ENCODE measurements at regions of chr17 and their contacts with region 1.

Region 1: GRCh38 chr17:49210158-49211029 is at the starts of genes ABI3 and GNGT2:
- DNase-seq: peak; percentile 35 to 82 (median 54)
- ATAC-seq: peak; percentile 78 to 80
- H3K4me3 Mint-ChIP-seq: peak within 1 kb of the TSS; percentile 72 to 99 (median 92)
- H3K27ac Mint-ChIP-seq: peak within 1 kb of the TSS; percentile 91 to 99 (median 96)
- H3K4me1 Mint-ChIP-seq: peaks cover 57 to 87% (median 80%) of the 10 kb centered on the region in 4 donors
- H3K27me3 Mint-ChIP-seq: no peaks in the 10 kb centered on the region
- polyA plus RNA-seq, gene ABI3: 27.7 to 50.7 (median 48.4) TPM
- polyA plus RNA-seq, gene GNGT2: 14.7 to 25.8 (median 17.1) TPM

Region 2: DNA sequence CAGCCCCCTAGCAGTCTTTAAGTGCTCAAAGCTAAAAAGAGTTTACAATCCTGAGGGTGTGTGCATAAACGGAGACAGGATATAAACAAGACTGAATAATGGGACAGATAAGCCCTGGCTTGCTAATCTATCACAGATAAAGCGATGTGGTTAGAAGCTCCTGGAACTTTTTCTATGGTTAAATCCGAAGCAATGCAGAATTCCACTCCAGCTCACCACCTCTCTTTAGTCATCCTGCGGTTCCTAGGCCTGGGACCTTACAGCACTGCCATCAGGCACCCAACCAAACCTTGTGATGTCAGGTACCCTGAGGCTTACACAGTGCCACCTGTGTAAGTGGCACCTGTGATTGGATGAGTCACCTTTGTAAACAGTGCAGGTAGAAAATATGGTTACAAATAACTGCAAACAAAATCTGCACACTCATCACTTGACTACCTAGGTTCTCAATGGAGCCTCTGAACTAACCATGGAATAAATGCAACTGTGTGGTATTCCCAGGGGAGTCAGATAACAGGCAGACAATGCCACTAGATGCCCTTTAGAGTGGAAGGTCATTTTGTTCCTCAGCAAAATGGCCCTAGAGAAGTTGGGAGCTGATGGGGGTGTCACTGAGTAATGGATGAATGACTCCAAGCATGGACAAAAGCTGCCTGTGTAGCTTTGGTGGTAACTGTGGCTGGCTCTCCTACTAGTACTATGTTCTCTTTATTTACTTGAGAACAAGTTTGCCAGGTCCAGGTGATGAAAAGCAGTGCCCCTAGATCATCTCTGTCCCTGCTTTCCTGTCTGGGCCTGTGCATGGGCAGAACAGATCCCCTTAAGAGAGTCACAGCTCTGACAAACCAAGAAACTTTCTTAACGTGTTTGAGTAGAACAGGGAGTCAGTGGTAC is 109.1 kb before region 1 on chr17:
- POLR2A ChIA-PET with region 1: no interaction called
- DNase-seq: no peak
- ATAC-seq: no peak
- H3K4me3 Mint-ChIP-seq: no peak overlapping the region
- H3K27ac Mint-ChIP-seq: no peak overlapping the region
- H3K4me1 Mint-ChIP-seq: no peaks in the 10 kb centered on the region
- H3K27me3 Mint-ChIP-seq: peaks cover 0 to 11% (median 3%) of the 10 kb centered on the region in 5 donors

Region 3: DNA sequence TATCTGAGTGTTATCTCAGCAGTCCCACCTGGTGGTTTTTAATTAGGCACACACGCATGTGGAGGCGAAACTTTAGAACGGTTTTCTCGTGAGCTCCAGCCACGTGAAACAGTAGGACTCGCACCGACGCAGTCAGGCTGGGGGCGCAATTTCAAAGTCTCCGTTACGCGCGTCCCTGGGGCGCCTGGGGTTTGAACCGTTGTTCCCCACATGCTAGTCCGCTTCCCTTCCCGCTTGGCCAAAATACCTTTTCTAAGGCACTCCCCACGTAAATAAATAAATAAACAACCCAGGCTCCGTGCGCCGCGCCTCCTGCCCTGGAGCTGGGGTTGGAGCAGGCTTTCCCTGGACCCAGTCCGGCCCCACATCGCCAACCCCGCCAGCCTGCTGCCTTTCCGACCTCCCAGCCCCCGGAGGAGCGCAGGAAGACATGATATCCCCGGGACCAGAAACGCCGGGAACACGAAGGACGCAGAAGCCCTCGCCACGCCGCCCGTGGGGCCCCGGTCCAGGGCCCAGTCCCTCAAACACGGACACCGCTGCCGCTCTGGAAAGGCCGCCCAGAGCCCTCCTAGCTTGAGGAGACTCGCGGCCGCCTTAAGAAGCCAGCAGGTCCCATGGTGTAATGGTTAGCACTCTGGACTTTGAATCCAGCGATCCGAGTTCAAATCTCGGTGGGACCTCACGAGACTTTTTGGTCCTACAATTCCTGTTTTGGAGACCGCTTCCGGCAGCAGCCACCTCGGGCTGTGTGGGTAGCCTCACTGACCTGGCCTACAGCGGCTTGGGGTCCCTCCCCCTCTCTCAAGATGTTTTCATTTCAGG is 18.3 kb before region 1 on chr17:
- POLR2A ChIA-PET with region 1: interaction called, 195 read pairs
- DNase-seq: peak; percentile 76 to 99 (median 86)
- ATAC-seq: peak; percentile 56 to 61
- H3K4me3 Mint-ChIP-seq: peak overlapping the region; percentile 90 to 98 (median 94)
- H3K27ac Mint-ChIP-seq: peak overlapping the region; percentile 96 to 100 (median 97)
- H3K4me1 Mint-ChIP-seq: peaks cover 23 to 40% (median 33%) of the 10 kb centered on the region in 4 donors
- H3K27me3 Mint-ChIP-seq: peaks cover 0 to 8% (median 0%) of the 10 kb centered on the region in 5 donors